ENCODE measurements at regions of chr6 and their contacts with region 1.

Region 1: GRCh38 chr6:34656378-34657036 is 40.1 kb downstream of the ILRUN start:
- DNase-seq: no peak
- ATAC-seq: peak; percentile 71
- H3K4me3 Mint-ChIP-seq: peak overlapping the region; percentile 85
- H3K27ac Mint-ChIP-seq: peak overlapping the region; percentile 93
- H3K4me1 Mint-ChIP-seq: peaks cover 24% of the 10 kb centered on the region
- H3K27me3 Mint-ChIP-seq: no peaks in the 10 kb centered on the region

Region 2: GRCh38 chr6:34671801-34672656 is 15.5 kb after region 1 on chr6:
- POLR2A ChIA-PET with region 1: interaction called, 27 read pairs
- DNase-seq: peak; percentile 59
- ATAC-seq: peak; percentile 99
- H3K4me3 Mint-ChIP-seq: peak overlapping the region; percentile 72
- H3K27ac Mint-ChIP-seq: peak overlapping the region; percentile 92
- H3K4me1 Mint-ChIP-seq: peaks cover 34% of the 10 kb centered on the region
- H3K27me3 Mint-ChIP-seq: no peaks in the 10 kb centered on the region

Region 3: GRCh38 chr6:34696739-34697543 is 40.4 kb after region 1 on chr6 and contains the start of gene ILRUN:
- POLR2A ChIA-PET with region 1: interaction called, 12 read pairs
- DNase-seq: peak; percentile 98
- ATAC-seq: peak; percentile 81
- H3K4me3 Mint-ChIP-seq: peak within 1 kb of the TSS; percentile 98
- H3K27ac Mint-ChIP-seq: peak within 1 kb of the TSS; percentile 99
- H3K4me1 Mint-ChIP-seq: peaks cover 30% of the 10 kb centered on the region
- H3K27me3 Mint-ChIP-seq: no peaks in the 10 kb centered on the region
- total RNA-seq, gene ILRUN: 66.1 to 73.8 TPM

Measured in activated naive CD8-positive, alpha-beta T cell treated with anti-CD3 and anti-CD28 coated beads, Interleukin-2, amount 10 ng/mL, durations not matched to agents 7 days and 5 days (primary cell).